Activated CD4-positive, alpha-beta T cell treated with anti-CD3 and anti-CD28 coated beads for 36 hours (primary cell): ENCODE measurements at regions of chrX and their contacts with region 1.

Region 1: GRCh38 chrX:9464435-9465371 is at the start of gene TBL1X:
- DNase-seq: peak; percentile 66
- ATAC-seq: peak; percentile 21
- H3K4me3 Mint-ChIP-seq: peak within 1 kb of the TSS; percentile 74
- H3K27ac Mint-ChIP-seq: peak within 1 kb of the TSS; percentile 88
- H3K4me1 Mint-ChIP-seq: peaks cover 40% of the 10 kb centered on the region
- H3K27me3 Mint-ChIP-seq: no peaks in the 10 kb centered on the region
- total RNA-seq, gene TBL1X: 21.2 to 24.2 TPM

Region 2: DNA sequence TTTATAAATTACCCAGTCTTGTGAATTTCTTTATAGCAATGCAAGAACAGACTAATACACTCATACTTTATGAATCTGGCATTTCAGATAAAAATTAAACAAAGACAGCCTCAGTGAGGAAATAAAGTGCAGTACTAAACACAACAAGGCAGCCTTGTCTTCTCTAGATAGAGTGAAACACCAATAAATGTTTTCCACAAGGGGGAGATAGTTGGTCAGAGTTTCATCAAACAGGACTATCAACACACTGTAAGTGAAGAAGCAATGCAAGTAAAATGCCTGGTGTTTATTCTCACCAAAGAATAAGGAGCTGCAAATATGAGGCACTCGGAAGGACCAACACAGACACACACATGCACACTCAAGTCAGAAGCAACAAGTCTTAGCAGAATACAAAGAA is 493.6 kb before region 1 on chrX:
- CTCF ChIA-PET with region 1: no interaction called
- POLR2A ChIA-PET with region 1: no interaction called
- intact Hi-C with region 1: loop called in 1 of 2 experiments (anchors 10 kb)
- DNase-seq: no peak
- ATAC-seq: peak; percentile 63
- H3K4me3 Mint-ChIP-seq: no peak overlapping the region
- H3K27ac Mint-ChIP-seq: no peak overlapping the region
- H3K4me1 Mint-ChIP-seq: no peaks in the 10 kb centered on the region
- H3K27me3 Mint-ChIP-seq: no peaks in the 10 kb centered on the region

Region 3: GRCh38 chrX:9285342-9285771 is 179.3 kb before region 1 on chrX:
- CTCF ChIA-PET with region 1: no interaction called
- POLR2A ChIA-PET with region 1: no interaction called
- intact Hi-C with region 1: loop called in 1 of 2 experiments (anchors 2 kb)
- DNase-seq: peak; percentile 80
- ATAC-seq: peak; percentile 97
- H3K4me3 Mint-ChIP-seq: peak overlapping the region; percentile 16
- H3K27ac Mint-ChIP-seq: peak overlapping the region; percentile 85
- H3K4me1 Mint-ChIP-seq: peaks cover 17% of the 10 kb centered on the region
- H3K27me3 Mint-ChIP-seq: no peaks in the 10 kb centered on the region

Region 4: GRCh38 chrX:9352694-9353411 is 111.8 kb before region 1 on chrX:
- CTCF ChIA-PET with region 1: no interaction called
- POLR2A ChIA-PET with region 1: no interaction called
- intact Hi-C with region 1: loop called in 1 of 2 experiments (anchors 2 kb)
- DNase-seq: peak; percentile 64
- ATAC-seq: peak; percentile 47
- H3K4me3 Mint-ChIP-seq: peak overlapping the region; percentile 23
- H3K27ac Mint-ChIP-seq: peak overlapping the region; percentile 77
- H3K4me1 Mint-ChIP-seq: peaks cover 31% of the 10 kb centered on the region
- H3K27me3 Mint-ChIP-seq: no peaks in the 10 kb centered on the region

Region 5: GRCh38 chrX:9429781-9430180 is 34.9 kb before region 1 on chrX:
- CTCF ChIA-PET with region 1: no interaction called
- POLR2A ChIA-PET with region 1: no interaction called
- intact Hi-C with region 1: no loop called
- DNase-seq: no peak
- ATAC-seq: no peak
- H3K4me3 Mint-ChIP-seq: no peak overlapping the region
- H3K27ac Mint-ChIP-seq: no peak overlapping the region
- H3K4me1 Mint-ChIP-seq: no peaks in the 10 kb centered on the region
- H3K27me3 Mint-ChIP-seq: no peaks in the 10 kb centered on the region

Region 6: DNA sequence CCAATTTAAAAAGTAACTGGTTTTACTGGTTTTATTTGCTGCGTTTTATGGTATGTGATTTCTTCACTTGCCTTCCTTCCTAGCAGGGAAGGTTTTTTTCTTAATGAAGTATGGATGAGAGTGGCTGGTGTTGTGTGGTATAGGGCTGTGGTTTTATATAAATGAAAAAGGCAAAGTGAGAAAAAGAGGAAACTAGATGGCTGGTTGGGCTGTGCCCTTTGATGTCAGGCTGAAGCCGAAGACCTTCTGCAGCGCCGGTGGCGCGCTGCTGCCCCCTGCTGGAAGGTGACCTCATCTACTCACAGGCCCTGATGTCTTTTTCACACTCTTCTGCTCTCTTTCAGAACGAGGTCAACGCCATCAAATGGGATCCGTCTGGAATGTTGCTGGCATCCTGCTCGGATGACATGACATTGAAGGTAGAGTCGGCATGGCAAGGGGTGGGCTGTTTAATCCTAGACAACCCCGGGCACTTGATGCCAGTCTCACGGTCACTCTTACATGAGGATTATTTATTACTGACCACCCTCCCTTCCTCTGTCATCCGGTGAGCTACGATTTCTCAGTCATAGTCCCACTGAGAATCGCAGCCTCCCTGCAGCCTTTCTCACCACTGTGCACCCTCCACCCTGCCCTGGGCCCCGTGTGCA is 244.3 kb after region 1 on chrX:
- CTCF ChIA-PET with region 1: interaction called, 3 read pairs
- POLR2A ChIA-PET with region 1: no interaction called
- intact Hi-C with region 1: loop called (anchors 1 to 2 kb)
- DNase-seq: peak; percentile 84
- ATAC-seq: peak; percentile 78
- H3K4me3 Mint-ChIP-seq: no peak overlapping the region
- H3K27ac Mint-ChIP-seq: no peak overlapping the region
- H3K4me1 Mint-ChIP-seq: peaks cover 6% of the 10 kb centered on the region
- H3K27me3 Mint-ChIP-seq: no peaks in the 10 kb centered on the region

Region 7: DNA sequence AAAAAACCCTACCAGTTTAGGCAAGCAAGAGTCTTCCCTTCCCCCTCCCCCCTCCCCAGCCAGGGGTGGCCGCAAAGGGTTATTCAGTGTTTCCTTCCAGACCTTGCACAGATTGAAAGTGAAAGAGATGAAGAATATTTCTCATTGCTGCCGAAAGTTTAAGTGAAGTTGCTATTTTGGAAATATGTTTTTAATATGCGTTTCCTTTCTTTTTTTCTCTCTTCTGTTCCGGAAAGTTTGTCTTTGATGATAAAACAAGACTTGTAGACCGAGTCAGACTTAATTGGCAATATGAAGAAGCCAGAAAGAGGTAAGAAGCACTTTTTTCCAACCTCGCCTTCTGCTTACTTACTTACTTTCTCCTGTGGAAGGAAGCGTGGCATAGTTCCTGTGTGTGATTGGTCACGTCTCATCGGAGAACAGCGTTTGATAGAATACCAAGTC is 633.6 kb after region 1 on chrX:
- CTCF ChIA-PET with region 1: no interaction called
- POLR2A ChIA-PET with region 1: no interaction called
- intact Hi-C with region 1: loop called in 1 of 2 experiments (anchors 1 kb)
- DNase-seq: peak; percentile 81
- ATAC-seq: peak; percentile 71
- H3K4me3 Mint-ChIP-seq: peak overlapping the region; percentile 67
- H3K27ac Mint-ChIP-seq: peak overlapping the region; percentile 94
- H3K4me1 Mint-ChIP-seq: peaks cover 49% of the 10 kb centered on the region
- H3K27me3 Mint-ChIP-seq: no peaks in the 10 kb centered on the region